CD8-positive, alpha-beta T cell (primary cell): ENCODE measurements at regions of chr19 and their contacts with region 1.

Region 1: DNA sequence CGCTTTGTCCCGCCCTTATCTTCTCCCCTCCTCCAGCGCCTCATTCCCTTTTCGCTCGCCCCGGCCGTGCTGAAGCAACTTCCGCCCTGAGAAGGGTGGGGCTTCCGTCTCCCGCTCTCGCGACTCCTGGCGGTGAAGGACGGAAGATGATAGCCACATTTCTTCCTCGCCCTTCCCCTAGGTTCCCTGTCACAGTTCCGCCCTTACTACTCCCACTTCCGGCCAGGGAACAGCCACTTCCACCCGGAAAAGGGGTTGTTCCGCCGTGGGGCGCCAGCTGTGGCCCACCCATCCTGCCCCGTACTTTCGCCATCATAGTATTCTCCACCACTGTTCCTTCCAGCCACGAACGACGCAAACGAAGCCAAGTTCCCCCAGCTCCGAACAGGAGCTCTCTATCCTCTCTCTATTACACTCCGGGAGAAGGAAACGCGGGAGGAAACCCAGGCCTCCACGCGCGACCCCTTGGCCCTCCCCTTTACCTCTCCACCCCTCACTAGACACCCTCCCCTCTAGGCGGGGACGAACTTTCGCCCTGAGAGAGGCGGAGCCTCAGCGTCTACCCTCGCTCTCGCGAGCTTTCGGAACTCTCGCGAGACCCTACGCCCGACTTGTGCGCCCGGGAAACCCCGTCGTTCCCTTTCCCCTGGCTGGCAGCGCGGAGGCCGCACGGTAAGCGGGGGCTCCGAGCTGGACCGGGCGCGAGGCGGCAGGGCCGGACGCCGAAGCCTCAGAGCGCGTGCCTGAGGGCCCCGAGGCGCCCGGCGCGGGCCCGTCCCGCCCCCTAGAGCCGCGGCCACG is at the start of gene RPS19:
- DNase-seq: peak; percentile 96 to 99 (median 98)
- ATAC-seq: peak; percentile 87
- H3K4me3 ChIP-seq: peak within 1 kb of the TSS; percentile 74 to 92
- H3K4me3 Mint-ChIP-seq: peak within 1 kb of the TSS; percentile 94
- H3K27ac ChIP-seq: peak within 1 kb of the TSS; percentile 79 to 97
- H3K27ac Mint-ChIP-seq: peak within 1 kb of the TSS; percentile 96
- H3K4me1 ChIP-seq: peaks cover 46% of the 10 kb centered on the region
- H3K4me1 Mint-ChIP-seq: peaks cover 50% of the 10 kb centered on the region
- H3K27me3 ChIP-seq: no peaks in the 10 kb centered on the region
- H3K27me3 Mint-ChIP-seq: peaks cover 4% of the 10 kb centered on the region
- CTCF ChIP-seq: peak; percentile 82
- total RNA-seq, gene RPS19: 3,663 to 3,781 TPM

Region 2: GRCh38 chr19:41872775-41873647 is 13.2 kb after region 1 on chr19:
- CTCF ChIA-PET with region 1: interaction called, 56 read pairs
- POLR2A ChIA-PET with region 1: interaction called, 82 read pairs
- intact Hi-C with region 1: loop called (anchors 1 kb)
- DNase-seq: peak; percentile 49 to 83 (median 75)
- ATAC-seq: no peak
- H3K4me3 ChIP-seq: no peak overlapping the region
- H3K4me3 Mint-ChIP-seq: peak overlapping the region; percentile 40
- H3K27ac ChIP-seq: peak overlapping the region; percentile 4 to 76
- H3K27ac Mint-ChIP-seq: peak overlapping the region; percentile 98
- H3K4me1 ChIP-seq: peaks cover 94% of the 10 kb centered on the region
- H3K4me1 Mint-ChIP-seq: peaks cover 79% of the 10 kb centered on the region
- H3K27me3 ChIP-seq: no peaks in the 10 kb centered on the region
- H3K27me3 Mint-ChIP-seq: no peaks in the 10 kb centered on the region
- CTCF ChIP-seq: peak; percentile 79

Region 3: GRCh38 chr19:41912899-41913537 is 53.2 kb after region 1 on chr19:
- CTCF ChIA-PET with region 1: interaction called, 5 read pairs
- POLR2A ChIA-PET with region 1: interaction called, 13 read pairs
- intact Hi-C with region 1: no loop called
- DNase-seq: peak in 3 of 9 experiments; percentile 50 to 56 (median 54)
- ATAC-seq: peak; percentile 15
- H3K4me3 ChIP-seq: no peak overlapping the region
- H3K4me3 Mint-ChIP-seq: peak overlapping the region; percentile 26
- H3K27ac ChIP-seq: no peak overlapping the region
- H3K27ac Mint-ChIP-seq: no peak overlapping the region
- H3K4me1 ChIP-seq: peaks cover 70% of the 10 kb centered on the region
- H3K4me1 Mint-ChIP-seq: peaks cover 43% of the 10 kb centered on the region
- H3K27me3 ChIP-seq: peaks cover 0 to 52% of the 10 kb centered on the region in 2 experiments
- H3K27me3 Mint-ChIP-seq: peaks cover 3% of the 10 kb centered on the region
- CTCF ChIP-seq: no peak

Region 4: DNA sequence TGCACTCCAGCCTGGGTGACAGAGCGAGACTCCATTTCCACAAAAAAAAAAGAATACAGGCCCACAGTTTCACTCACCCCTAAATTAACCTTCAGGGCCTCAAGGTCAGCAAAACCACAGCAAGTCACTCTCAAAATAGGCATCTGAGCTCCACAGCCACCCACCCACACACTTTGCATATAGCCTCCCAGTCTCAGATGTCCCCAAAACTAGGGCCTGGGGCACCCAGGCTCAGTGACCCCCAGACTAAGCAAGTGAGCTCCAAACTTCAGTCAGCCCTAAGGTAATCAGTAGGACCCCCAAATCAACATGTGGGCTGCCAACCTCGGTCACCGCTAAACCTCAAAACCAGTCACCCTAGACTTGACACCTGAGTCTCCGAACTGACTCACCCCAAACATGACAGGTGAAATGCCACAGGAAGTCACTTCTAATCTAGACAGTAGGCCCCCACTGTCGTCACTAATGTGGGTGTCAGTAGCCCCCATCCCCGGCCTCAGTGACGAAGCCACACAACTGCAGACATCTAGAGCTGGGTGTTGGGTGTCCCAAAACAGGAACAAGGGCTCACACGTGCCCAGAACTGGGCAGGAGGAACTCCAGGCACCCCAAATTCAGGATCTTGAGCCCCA is 85.4 kb after region 1 on chr19:
- CTCF ChIA-PET with region 1: interaction called, 43 read pairs
- POLR2A ChIA-PET with region 1: interaction called, 23 read pairs
- intact Hi-C with region 1: loop called in 1 of 2 experiments (anchors 2 kb)
- DNase-seq: peak; percentile 80 to 98 (median 91)
- ATAC-seq: peak; percentile 82
- H3K4me3 ChIP-seq: no peak overlapping the region
- H3K4me3 Mint-ChIP-seq: peak overlapping the region; percentile 69
- H3K27ac ChIP-seq: peak overlapping the region; percentile 62 to 66
- H3K27ac Mint-ChIP-seq: peak overlapping the region; percentile 99
- H3K4me1 ChIP-seq: peaks cover 40% of the 10 kb centered on the region
- H3K4me1 Mint-ChIP-seq: peaks cover 61% of the 10 kb centered on the region
- H3K27me3 ChIP-seq: peaks cover 0 to 4% of the 10 kb centered on the region in 2 experiments
- H3K27me3 Mint-ChIP-seq: no peaks in the 10 kb centered on the region
- CTCF ChIP-seq: no peak

Region 5: DNA sequence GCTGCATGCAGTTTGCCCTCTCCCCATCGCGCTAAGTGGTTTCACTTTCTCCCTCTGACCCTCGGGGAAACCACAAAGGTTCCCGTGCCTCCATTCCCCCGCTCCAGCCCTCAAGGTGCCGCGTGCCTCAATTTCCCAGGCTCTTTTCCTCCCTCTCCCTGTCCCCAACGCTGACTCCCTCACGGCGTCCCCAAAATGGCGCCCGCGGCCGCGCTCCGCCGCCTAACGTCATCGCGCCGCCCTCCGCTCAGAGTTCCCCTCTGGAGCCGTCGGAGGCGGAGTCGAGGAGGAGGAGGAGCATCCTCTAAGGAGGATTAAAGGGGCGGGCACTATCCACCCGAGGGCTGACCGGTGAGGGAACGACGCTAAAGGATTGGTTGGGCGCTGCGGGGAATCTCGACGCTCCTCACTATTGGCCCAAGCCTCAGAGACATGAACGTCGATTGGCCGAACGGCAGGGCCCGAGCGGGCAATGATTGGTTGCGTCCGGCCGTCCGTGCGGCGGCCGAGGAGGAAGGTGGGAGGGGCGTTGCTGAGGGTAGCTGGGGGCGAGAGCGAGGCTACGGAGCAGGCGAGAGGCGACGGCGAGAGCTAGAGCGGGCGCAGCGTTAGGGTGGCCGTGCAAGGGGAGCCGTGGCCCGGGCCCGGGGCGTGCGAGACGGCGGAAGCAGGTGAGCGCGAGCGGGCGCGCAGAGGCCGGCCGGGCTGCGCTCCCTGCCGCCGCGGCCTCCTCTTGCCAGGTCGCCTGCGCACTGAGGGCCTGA is 216.0 kb after region 1 on chr19 and contains the start of gene ZNF574:
- CTCF ChIA-PET with region 1: no interaction called
- POLR2A ChIA-PET with region 1: no interaction called
- intact Hi-C with region 1: loop called (anchors 1 kb)
- DNase-seq: peak; percentile 97 to 100 (median 98)
- ATAC-seq: peak; percentile 95
- H3K4me3 ChIP-seq: peak within 1 kb of the TSS; percentile 72 to 76
- H3K4me3 Mint-ChIP-seq: peak within 1 kb of the TSS; percentile 97
- H3K27ac ChIP-seq: peak within 1 kb of the TSS; percentile 94 to 100
- H3K27ac Mint-ChIP-seq: peak within 1 kb of the TSS; percentile 99
- H3K4me1 ChIP-seq: peaks cover 21% of the 10 kb centered on the region
- H3K4me1 Mint-ChIP-seq: peaks cover 37% of the 10 kb centered on the region
- H3K27me3 ChIP-seq: no peaks in the 10 kb centered on the region
- H3K27me3 Mint-ChIP-seq: no peaks in the 10 kb centered on the region
- CTCF ChIP-seq: no peak
- total RNA-seq, gene ZNF574: 25.0 to 26.2 TPM

Region 6: DNA sequence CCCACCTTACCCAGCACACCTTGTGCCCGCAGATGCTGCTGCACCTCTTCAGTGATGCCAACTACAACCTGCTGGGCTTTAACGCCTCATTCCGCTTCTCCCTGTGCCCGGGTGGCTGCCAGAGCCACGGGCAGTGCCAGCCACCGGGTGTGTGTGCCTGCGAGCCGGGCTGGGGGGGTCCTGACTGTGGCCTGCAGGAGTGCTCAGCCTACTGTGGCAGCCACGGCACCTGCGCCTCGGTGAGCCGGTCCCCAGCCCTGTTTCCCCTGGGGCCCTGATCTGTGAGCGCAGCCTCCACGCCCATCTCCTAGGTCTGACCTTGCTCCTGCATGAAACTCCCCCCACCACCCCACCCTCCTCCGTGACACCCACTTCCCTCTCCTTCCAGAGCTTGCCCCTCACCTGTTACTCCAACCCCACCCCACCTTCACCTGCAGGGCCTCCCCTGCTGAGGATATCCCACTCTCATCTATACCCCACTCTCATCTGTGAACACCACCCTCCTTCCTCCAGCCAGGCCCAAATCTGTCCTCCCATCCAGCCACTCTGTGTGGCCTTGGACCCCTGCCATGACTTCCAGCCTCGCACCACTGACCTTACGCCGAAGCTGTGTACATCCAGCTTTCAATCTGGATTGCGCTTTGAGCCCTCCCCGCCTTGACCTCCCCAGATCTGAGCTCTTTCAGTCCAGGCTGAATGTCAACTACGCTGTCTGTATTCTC is 474.3 kb after region 1 on chr19:
- CTCF ChIA-PET with region 1: no interaction called
- POLR2A ChIA-PET with region 1: no interaction called
- intact Hi-C with region 1: no loop called
- DNase-seq: no peak
- ATAC-seq: no peak
- H3K4me3 ChIP-seq: no peak overlapping the region
- H3K4me3 Mint-ChIP-seq: no peak overlapping the region
- H3K27ac ChIP-seq: no peak overlapping the region
- H3K27ac Mint-ChIP-seq: no peak overlapping the region
- H3K4me1 ChIP-seq: no peaks in the 10 kb centered on the region
- H3K4me1 Mint-ChIP-seq: no peaks in the 10 kb centered on the region
- H3K27me3 ChIP-seq: no peaks in the 10 kb centered on the region
- H3K27me3 Mint-ChIP-seq: no peaks in the 10 kb centered on the region
- CTCF ChIP-seq: no peak